ENCODE measurements at regions of chr7 and their contacts with region 1.

Region 1: GRCh38 chr7:131327626-131328376 is at the start of gene MKLN1:
- DNase-seq: peak; percentile 90
- H3K4me3 ChIP-seq: peak within 1 kb of the TSS; percentile 69 to 99 (median 87)
- H3K27ac ChIP-seq: peak within 1 kb of the TSS; percentile 98
- H3K4me1 ChIP-seq: peaks cover 17% of the 10 kb centered on the region
- H3K27me3 ChIP-seq: no peaks in the 10 kb centered on the region
- CTCF ChIP-seq: no peak
- POLR2A ChIP-seq: peak; percentile 81
- total RNA-seq, gene MKLN1: 31.7 and 32.1 TPM in 2 replicates

Region 2: DNA sequence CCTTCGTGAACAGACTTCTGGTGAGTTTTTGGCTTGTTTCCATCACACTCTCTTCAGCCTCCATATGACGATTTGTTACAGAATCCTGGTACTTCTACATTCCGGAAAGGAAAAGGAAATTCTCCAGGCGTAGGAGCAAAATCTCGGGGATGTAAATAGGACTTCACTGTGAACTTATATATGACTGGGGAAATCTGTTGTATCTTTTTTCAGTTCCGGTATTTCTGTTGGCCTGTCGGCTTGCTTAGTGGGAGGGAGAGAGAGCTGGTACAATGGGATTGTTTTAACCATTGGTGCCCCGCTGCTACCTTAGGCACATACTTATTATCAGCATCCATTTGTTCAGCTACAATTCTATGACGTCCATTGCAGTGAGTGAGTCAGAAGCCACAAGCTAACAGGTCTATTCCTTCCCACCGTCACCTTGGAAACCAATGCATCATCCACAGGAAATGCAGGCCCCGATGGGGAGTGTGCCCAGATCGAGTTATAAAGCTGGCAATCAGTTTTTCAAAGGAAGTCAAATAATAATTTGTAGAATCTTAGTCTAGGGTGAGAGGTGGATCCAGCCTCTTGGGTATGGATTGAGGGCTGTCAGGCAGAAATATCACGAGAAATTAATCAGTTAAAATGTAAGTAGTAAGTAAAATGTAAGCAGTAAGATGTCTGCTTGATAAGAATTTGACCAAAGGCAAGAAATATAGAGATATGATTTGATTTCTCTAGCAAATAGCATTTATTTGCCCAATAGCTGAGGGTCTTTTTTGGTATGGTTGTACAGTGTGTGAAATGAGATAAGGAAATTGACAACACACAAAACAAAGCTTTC is 92.1 kb before region 1 on chr7:
- CTCF ChIA-PET with region 1: no interaction called
- POLR2A ChIA-PET with region 1: no interaction called
- dilution Hi-C with region 1: no loop called
- intact Hi-C with region 1: loop called (anchors 2 kb)
- DNase-seq: peak; percentile 96
- H3K4me3 ChIP-seq: peak overlapping the region in 1 of 3 experiments; percentile 47
- H3K27ac ChIP-seq: peak overlapping the region; percentile 95
- H3K4me1 ChIP-seq: peaks cover 33% of the 10 kb centered on the region
- H3K27me3 ChIP-seq: no peaks in the 10 kb centered on the region
- CTCF ChIP-seq: no peak
- POLR2A ChIP-seq: no peak

Region 3: GRCh38 chr7:131424219-131424822 is 96.5 kb after region 1 on chr7:
- CTCF ChIA-PET with region 1: interaction called, 3 read pairs
- POLR2A ChIA-PET with region 1: no interaction called
- dilution Hi-C with region 1: no loop called
- intact Hi-C with region 1: loop called (anchors 2 kb)
- DNase-seq: peak; percentile 66
- H3K4me3 ChIP-seq: no peak overlapping the region
- H3K27ac ChIP-seq: no peak overlapping the region
- H3K4me1 ChIP-seq: no peaks in the 10 kb centered on the region
- H3K27me3 ChIP-seq: no peaks in the 10 kb centered on the region
- CTCF ChIP-seq: peak; percentile 39 to 43
- POLR2A ChIP-seq: no peak

Region 4: DNA sequence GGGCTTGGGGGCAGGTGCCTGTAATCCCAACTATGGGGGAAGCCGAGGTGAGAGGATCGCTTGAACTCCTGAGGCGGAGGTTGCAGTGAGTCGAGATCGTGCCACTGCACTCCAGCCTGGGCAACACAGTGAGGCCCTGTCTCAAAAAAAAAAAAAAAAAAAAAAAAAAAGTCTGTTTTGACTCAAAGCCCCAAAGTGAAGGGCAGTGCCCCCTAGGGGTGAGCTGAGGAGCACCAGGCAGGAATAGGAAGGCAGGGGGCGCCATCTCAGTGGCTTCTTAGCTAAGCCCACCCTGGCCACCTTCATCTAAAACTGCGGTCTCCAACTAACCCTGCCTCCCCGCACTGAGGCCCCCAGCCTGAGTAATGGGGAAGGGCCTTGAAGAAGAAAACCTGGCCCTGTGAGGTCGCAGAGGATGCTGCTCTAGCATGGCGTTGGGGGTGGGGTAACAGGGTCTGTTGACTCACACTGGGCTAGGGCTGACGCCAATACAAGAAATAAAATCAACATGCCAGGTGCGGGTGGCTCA is 218.8 kb after region 1 on chr7:
- CTCF ChIA-PET with region 1: no interaction called
- POLR2A ChIA-PET with region 1: no interaction called
- dilution Hi-C with region 1: no loop called
- intact Hi-C with region 1: no loop called
- DNase-seq: peak; percentile 57
- H3K4me3 ChIP-seq: no peak overlapping the region
- H3K27ac ChIP-seq: no peak overlapping the region
- H3K4me1 ChIP-seq: peaks cover 29% of the 10 kb centered on the region
- H3K27me3 ChIP-seq: no peaks in the 10 kb centered on the region
- CTCF ChIP-seq: peak; percentile 83 to 85
- POLR2A ChIP-seq: no peak

Measured in endothelial cell of umbilical vein (primary cell).